ENCODE measurements at regions of chr1 and their contacts with region 1.

Region 1: DNA sequence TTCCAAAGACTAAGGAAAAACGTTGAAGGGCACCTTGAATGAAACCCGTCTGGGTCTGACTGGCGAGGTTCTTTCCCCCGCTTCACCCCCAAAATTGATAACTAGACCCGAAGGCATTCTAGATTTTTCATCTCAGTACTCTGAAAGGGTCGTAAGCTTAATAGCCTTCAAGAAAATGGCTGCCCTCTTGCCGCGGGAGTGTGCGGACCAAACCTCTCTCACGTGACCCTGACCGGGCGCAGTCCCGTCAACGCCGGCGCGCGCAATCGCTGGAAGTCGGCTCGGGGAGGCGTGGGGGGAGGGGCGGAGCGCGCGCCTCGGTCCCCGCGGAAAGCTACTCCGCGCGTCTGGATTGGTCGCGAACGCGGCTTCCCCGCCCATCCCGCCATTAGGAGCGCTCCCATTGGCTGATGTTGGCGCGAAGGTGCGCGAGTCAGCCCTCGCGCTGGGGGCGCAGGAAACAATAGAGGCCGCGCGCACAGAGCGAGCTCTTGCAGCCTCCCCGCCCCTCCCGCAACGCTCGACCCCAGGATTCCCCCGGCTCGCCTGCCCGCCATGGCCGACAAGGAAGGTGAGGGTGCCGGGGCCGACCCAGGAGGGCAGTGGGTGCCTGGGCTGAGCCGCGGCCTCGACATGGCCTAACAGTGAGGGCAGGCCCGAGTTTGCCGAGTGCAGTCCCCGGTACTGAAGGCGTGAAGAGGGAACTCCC is at the start of gene RBBP4:
- H3K4me3 Mint-ChIP-seq: peak within 1 kb of the TSS; percentile 89
- H3K27ac Mint-ChIP-seq: peak within 1 kb of the TSS; percentile 100
- H3K4me1 Mint-ChIP-seq: peaks cover 50% of the 10 kb centered on the region
- H3K27me3 Mint-ChIP-seq: no peaks in the 10 kb centered on the region

Region 2: GRCh38 chr1:32500387-32501209 is 150.3 kb before region 1 on chr1:
- intact Hi-C with region 1: no loop called
- H3K4me3 Mint-ChIP-seq: peak overlapping the region; percentile 88
- H3K27ac Mint-ChIP-seq: peak overlapping the region; percentile 91
- H3K4me1 Mint-ChIP-seq: no peaks in the 10 kb centered on the region
- H3K27me3 Mint-ChIP-seq: peaks cover 12% of the 10 kb centered on the region

Region 3: DNA sequence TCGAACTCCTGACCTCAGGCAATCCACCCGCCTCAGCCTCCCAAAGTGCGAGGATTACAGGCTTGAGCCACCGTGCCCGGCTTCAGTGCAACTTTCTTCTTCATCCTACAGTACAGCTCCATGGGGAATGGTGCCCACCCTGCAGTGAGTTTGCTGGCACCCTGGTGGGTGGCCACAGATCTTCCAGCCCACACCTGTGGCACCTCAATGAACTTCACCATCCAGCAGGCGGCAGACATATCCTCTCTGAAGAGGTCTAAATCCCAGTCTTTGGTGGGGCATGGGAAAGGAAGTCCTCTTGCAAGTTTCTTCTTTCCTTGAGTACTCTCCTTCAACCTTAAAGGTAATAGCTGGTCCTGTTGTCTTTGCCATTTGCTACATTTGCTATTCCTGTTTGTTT is 129.7 kb before region 1 on chr1:
- intact Hi-C with region 1: loop called (anchors 10 kb)
- H3K4me3 Mint-ChIP-seq: peak overlapping the region; percentile 51
- H3K27ac Mint-ChIP-seq: peak overlapping the region; percentile 41
- H3K4me1 Mint-ChIP-seq: peaks cover 5% of the 10 kb centered on the region
- H3K27me3 Mint-ChIP-seq: peaks cover 9% of the 10 kb centered on the region

Region 4: DNA sequence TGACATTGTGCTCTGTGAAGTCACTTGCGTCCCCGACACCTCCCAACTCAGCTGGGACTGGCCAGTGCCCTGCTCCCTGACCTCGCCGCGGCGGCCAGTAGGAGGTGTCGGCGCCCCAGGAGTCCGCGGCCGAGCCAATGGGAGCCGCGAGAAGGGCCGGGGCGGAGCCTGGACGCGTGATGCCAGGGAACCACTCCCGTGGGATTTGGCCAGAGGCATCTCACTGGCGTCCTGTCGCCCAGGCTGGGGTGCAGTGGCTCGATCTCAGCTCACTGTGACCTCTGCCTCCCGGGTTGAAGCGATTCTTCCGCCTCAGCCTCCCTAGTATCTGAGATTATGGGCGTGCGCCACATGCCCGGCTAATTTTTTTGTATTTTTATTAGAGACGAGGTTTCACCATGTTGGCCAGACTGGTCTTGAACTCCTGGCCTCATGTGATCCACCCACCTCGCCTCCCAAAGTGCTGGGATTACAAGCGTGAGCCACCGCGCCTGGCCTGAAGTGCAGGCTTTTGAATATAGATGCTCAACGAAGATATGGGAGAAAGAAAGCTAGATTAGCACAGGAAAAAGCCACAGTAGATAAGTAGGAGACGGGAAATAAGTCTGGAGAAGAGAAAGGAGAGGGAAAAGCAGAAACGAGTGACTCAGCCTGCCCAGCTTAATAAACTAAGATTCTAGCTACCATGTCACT is 38.6 kb before region 1 on chr1:
- intact Hi-C with region 1: loop called (anchors 1 kb)
- H3K4me3 Mint-ChIP-seq: peak overlapping the region; percentile 77
- H3K27ac Mint-ChIP-seq: peak overlapping the region; percentile 81
- H3K4me1 Mint-ChIP-seq: peaks cover 17% of the 10 kb centered on the region
- H3K27me3 Mint-ChIP-seq: peaks cover 2% of the 10 kb centered on the region

Region 5: GRCh38 chr1:32636914-32637645 is 13.8 kb before region 1 on chr1:
- intact Hi-C with region 1: no loop called
- H3K4me3 Mint-ChIP-seq: peak overlapping the region; percentile 72
- H3K27ac Mint-ChIP-seq: peak overlapping the region; percentile 90
- H3K4me1 Mint-ChIP-seq: peaks cover 20% of the 10 kb centered on the region
- H3K27me3 Mint-ChIP-seq: no peaks in the 10 kb centered on the region